GM10248 (cell line): ENCODE measurements at regions of chr5 and their contacts with region 1.

Region 1: GRCh38 chr5:177124486-177124991 is 9.0 kb upstream of the NSD1 start:
- DNase-seq: peak; percentile 54
- CTCF ChIP-seq: no peak

Region 2: GRCh38 chr5:178204182-178204894 is 1079.8 kb after region 1 on chr5 and contains the start of gene HNRNPAB:
- CTCF ChIA-PET with region 1: no interaction called
- POLR2A ChIA-PET with region 1: interaction called, 11 read pairs
- DNase-seq: peak; percentile 99
- CTCF ChIP-seq: no peak